ENCODE measurements at regions of chr7 and their contacts with region 1.

Region 1: GRCh38 chr7:121329191-121330052 is 622 bp downstream of the WNT16 start:
- DNase-seq: no peak
- ATAC-seq: peak in 6 of 8 donors; percentile 22 to 44 (median 37)
- H3K4me3 ChIP-seq: peak overlapping the region in 9 of 10 donors; percentile 25 to 52 (median 40)
- H3K27ac ChIP-seq: no peak overlapping the region
- H3K4me1 ChIP-seq: peaks cover 6 to 23% (median 18%) of the 10 kb centered on the region in 9 donors
- H3K27me3 ChIP-seq: peaks cover 8 to 81% (median 71%) of the 10 kb centered on the region in 7 donors
- CTCF ChIP-seq: no peak

Region 2: DNA sequence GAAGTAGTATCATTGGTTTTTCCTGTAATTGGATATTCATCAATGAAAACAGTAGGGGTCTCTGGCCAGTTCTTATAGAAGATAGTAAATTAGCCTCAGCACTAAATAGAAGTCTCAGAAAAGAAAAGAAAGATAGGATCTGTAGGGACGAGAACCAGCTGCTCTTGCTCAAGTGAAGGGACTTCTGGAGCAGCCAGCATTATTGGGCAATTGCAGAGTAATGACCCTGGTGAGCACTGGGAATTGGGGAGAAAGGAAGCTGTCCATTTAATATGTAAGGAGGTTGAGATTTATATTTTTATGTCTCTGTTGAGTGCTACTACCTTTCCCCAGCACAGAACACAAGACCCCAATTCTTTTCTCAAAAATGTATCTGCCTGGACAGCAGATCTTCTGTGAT is 61.8 kb before region 1 on chr7:
- intact Hi-C with region 1: loop called in 1 of 10 experiments (anchors 10 kb)
- DNase-seq: no peak
- ATAC-seq: no peak
- H3K4me3 ChIP-seq: no peak overlapping the region
- H3K27ac ChIP-seq: no peak overlapping the region
- H3K4me1 ChIP-seq: no peaks in the 10 kb centered on the region
- H3K27me3 ChIP-seq: no peaks in the 10 kb centered on the region
- CTCF ChIP-seq: no peak

Region 3: GRCh38 chr7:121575194-121575765 is 245.9 kb after region 1 on chr7:
- intact Hi-C with region 1: no loop called
- DNase-seq: no peak
- ATAC-seq: no peak
- H3K4me3 ChIP-seq: no peak overlapping the region
- H3K27ac ChIP-seq: no peak overlapping the region
- H3K4me1 ChIP-seq: peaks cover 0 to 4% (median 0%) of the 10 kb centered on the region in 9 donors
- H3K27me3 ChIP-seq: peaks cover 0 to 5% (median 0%) of the 10 kb centered on the region in 7 donors
- CTCF ChIP-seq: no peak

Measured in heart right ventricle (tissue), 16 donors.